GM23248 (cell line): ENCODE measurements at regions of chr14 and their contacts with region 1.

Region 1: GRCh38 chr14:93655078-93655750 is 133.1 kb downstream of the PRIMA1 start:
- DNase-seq: peak; percentile 75
- H3K4me3 ChIP-seq: no peak overlapping the region
- H3K27ac ChIP-seq: no peak overlapping the region
- H3K4me1 ChIP-seq: no peaks in the 10 kb centered on the region
- H3K27me3 ChIP-seq: no peaks in the 10 kb centered on the region; the same call in 1 of the 2 replicates

Region 2: GRCh38 chr14:93456356-93456755 is 198.9 kb before region 1 on chr14:
- in situ Hi-C with region 1: no loop called
- DNase-seq: no peak
- H3K4me3 ChIP-seq: no peak overlapping the region
- H3K27ac ChIP-seq: no peak overlapping the region
- H3K4me1 ChIP-seq: no peaks in the 10 kb centered on the region
- H3K27me3 ChIP-seq: no peaks in the 10 kb centered on the region

Region 3: GRCh38 chr14:93880021-93880820 is 225.0 kb after region 1 on chr14:
- in situ Hi-C with region 1: loop called (anchors 10 kb)
- DNase-seq: peak; percentile 30
- H3K4me3 ChIP-seq: peak overlapping the region; percentile 25; the same call in 1 of the 2 replicates
- H3K27ac ChIP-seq: no peak overlapping the region
- H3K4me1 ChIP-seq: 0 out of 2 replicates have a peak, but pooled peaks cover 3% of the 10 kb centered on the region
- H3K27me3 ChIP-seq: no peaks in the 10 kb centered on the region

Region 4: GRCh38 chr14:94129111-94129757 is 474.0 kb after region 1 on chr14 and contains the start of gene IFI27L2:
- in situ Hi-C with region 1: loop called (anchors 25 kb)
- DNase-seq: peak; percentile 89
- H3K4me3 ChIP-seq: peak within 1 kb of the TSS; percentile 80
- H3K27ac ChIP-seq: peak within 1 kb of the TSS; percentile 43
- H3K4me1 ChIP-seq: peaks cover 5% of the 10 kb centered on the region; the same call in 1 of the 2 replicates
- H3K27me3 ChIP-seq: no peaks in the 10 kb centered on the region
- total RNA-seq, gene IFI27L2: 61.7 and 95.3 TPM in 2 replicates